Activated CD4-positive, alpha-beta memory T cell treated with anti-CD3 and anti-CD28 coated beads for 36 hours (primary cell): ENCODE measurements at regions of chr11 and their contacts with region 1.

Region 1: DNA sequence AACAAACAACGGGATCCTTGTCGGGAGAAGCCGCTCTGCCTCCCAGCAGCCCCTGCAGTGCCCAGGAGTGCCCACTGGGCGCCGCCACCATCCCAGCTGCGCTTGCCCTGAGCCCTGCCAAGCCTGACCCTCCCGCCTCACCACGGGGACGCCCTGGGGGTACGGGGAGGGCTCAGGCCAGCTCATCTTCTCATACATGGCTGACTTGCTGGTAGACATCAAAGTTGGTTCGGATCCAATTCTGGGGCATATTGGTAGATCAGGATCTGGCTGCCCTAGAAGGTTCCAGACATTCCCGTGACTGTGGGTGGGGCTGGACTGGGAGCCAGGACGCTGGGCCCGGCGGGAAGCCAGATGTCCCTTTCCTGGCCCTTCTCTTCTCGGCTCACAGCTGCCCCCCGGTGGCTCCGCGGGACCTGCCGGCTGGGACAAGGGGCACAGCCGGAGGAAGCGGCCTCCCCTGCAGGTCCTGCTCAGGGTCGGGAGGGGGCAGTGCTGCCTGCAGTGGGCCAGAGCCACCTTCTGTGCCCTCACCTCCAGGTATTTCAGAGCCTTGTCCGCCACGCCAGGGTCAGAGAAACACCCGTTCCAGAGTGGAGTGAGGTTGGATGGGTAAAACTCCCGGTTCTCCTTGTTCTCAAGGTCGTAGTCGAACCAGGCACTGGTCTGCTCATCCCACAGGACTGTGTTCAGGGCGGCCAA is 10.6 kb upstream of the TREH start:
- DNase-seq: peak; percentile 94
- H3K4me3 Mint-ChIP-seq: peak overlapping the region; percentile 79
- H3K27ac Mint-ChIP-seq: peak overlapping the region; percentile 70
- H3K4me1 Mint-ChIP-seq: peaks cover 39% of the 10 kb centered on the region
- H3K27me3 Mint-ChIP-seq: peaks cover 2% of the 10 kb centered on the region

Region 2: DNA sequence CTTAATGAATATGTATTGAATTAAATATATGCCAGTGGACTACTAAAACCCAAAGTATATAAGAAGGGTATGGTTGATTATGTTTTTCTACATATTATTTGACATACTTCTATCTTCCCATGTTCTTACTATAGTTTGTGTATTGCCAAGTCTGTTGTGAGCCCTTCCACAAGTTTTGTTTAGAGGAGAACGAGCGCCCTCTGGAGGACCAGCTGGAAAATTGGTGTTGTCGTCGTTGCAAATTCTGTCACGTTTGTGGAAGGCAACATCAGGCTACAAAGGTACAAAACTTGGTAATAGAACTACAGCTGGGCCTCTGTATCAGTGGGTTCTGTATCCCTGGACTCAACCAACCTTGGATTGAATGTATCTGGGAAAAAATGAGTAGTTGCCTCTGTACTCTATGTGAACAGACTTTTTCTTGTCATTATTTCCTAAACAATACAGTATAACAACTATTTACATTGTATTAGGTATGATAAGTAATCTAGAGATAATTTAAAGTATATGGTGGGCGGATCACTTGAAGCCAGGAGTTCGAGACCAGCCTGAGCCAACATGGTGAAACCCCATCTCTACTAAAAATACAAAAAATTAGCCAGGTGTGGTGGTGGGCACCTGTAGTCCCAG is 201.4 kb before region 1 on chr11:
- CTCF ChIA-PET with region 1: no interaction called
- POLR2A ChIA-PET with region 1: no interaction called
- intact Hi-C with region 1: no loop called
- DNase-seq: peak; percentile 86
- H3K4me3 Mint-ChIP-seq: no peak overlapping the region
- H3K27ac Mint-ChIP-seq: no peak overlapping the region
- H3K4me1 Mint-ChIP-seq: peaks cover 5% of the 10 kb centered on the region
- H3K27me3 Mint-ChIP-seq: no peaks in the 10 kb centered on the region

Region 3: GRCh38 chr11:118610804-118611795 is 78.9 kb before region 1 on chr11:
- CTCF ChIA-PET with region 1: interaction called, 10 read pairs
- POLR2A ChIA-PET with region 1: no interaction called
- intact Hi-C with region 1: no loop called
- DNase-seq: peak; percentile 90
- H3K4me3 Mint-ChIP-seq: peak overlapping the region; percentile 14
- H3K27ac Mint-ChIP-seq: no peak overlapping the region
- H3K4me1 Mint-ChIP-seq: peaks cover 22% of the 10 kb centered on the region
- H3K27me3 Mint-ChIP-seq: peaks cover 12% of the 10 kb centered on the region

Region 4: GRCh38 chr11:118679483-118679882 is 10.5 kb before region 1 on chr11 and contains the start of gene TREH:
- CTCF ChIA-PET with region 1: interaction called, 18 read pairs
- POLR2A ChIA-PET with region 1: no interaction called
- intact Hi-C with region 1: no loop called
- DNase-seq: no peak
- H3K4me3 Mint-ChIP-seq: no peak within 1 kb of the TSS
- H3K27ac Mint-ChIP-seq: no peak within 1 kb of the TSS
- H3K4me1 Mint-ChIP-seq: no peaks in the 10 kb centered on the region
- H3K27me3 Mint-ChIP-seq: no peaks in the 10 kb centered on the region
- total RNA-seq, gene TREH: not detected

Region 5: GRCh38 chr11:118746988-118747585 is 57.1 kb after region 1 on chr11:
- CTCF ChIA-PET with region 1: interaction called, 12 read pairs
- POLR2A ChIA-PET with region 1: no interaction called
- intact Hi-C with region 1: loop called (anchors 5 kb)
- DNase-seq: no peak
- H3K4me3 Mint-ChIP-seq: no peak overlapping the region
- H3K27ac Mint-ChIP-seq: no peak overlapping the region
- H3K4me1 Mint-ChIP-seq: peaks cover 2% of the 10 kb centered on the region
- H3K27me3 Mint-ChIP-seq: no peaks in the 10 kb centered on the region

Region 6: DNA sequence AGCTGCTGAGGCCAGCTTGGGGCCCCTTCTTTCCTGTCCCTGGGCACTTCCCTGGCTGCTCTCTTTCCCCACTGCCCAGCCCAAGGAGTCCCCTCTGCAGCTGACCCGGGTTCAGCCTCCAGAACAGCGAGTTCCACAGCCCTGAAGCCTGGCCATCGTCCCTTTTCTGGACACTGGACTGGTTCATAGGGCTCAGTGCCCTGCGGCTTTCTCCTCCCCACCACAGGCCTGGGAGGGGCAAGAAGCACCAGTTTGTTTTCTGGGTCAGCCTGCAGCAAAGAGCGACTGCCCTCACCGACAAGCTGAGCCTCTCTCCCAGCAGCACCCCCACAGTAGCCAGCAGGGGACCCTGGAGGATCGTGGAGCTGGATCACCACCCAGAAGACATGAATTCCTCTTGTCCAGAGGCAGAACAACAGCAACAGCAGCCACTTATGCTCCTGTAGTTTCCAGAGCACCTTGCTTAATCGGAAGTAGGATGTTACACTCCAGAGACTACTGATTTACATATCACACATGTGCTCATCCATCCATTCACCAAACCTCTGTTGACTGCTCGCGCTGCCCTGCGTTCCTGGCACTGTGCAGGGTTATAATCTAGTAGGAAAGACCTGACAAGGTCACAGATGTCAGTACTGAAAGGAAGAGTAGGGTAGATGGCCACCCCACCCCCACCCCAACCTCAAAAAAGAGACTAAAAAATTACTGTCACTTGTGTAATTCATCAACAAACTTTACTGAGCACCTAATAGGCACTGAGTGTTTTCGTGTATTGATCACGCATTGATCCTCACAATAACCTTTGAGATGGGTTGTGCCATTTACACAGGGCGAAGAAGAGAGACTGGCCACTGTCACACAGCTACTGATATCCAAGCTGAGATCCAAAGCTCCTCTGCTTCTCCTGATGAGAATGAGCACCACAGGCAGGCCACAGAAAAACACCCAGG is 180.7 kb after region 1 on chr11:
- CTCF ChIA-PET with region 1: interaction called, 11 read pairs
- POLR2A ChIA-PET with region 1: interaction called, 3 read pairs
- intact Hi-C with region 1: no loop called
- DNase-seq: peak; percentile 73
- H3K4me3 Mint-ChIP-seq: peak overlapping the region; percentile 83
- H3K27ac Mint-ChIP-seq: peak overlapping the region; percentile 99
- H3K4me1 Mint-ChIP-seq: peaks cover 56% of the 10 kb centered on the region
- H3K27me3 Mint-ChIP-seq: no peaks in the 10 kb centered on the region

Region 7: GRCh38 chr11:118895142-118896039 is 205.4 kb after region 1 on chr11:
- CTCF ChIA-PET with region 1: interaction called, 20 read pairs
- POLR2A ChIA-PET with region 1: interaction called, 4 read pairs
- intact Hi-C with region 1: no loop called
- DNase-seq: peak; percentile 89
- H3K4me3 Mint-ChIP-seq: peak overlapping the region; percentile 58
- H3K27ac Mint-ChIP-seq: peak overlapping the region; percentile 93
- H3K4me1 Mint-ChIP-seq: peaks cover 71% of the 10 kb centered on the region
- H3K27me3 Mint-ChIP-seq: no peaks in the 10 kb centered on the region

Region 8: GRCh38 chr11:118956094-118956846 is 266.3 kb after region 1 on chr11 and contains the start of gene UPK2:
- CTCF ChIA-PET with region 1: interaction called, 12 read pairs
- POLR2A ChIA-PET with region 1: no interaction called
- intact Hi-C with region 1: loop called (anchors 1 kb)
- DNase-seq: peak; percentile 93
- H3K4me3 Mint-ChIP-seq: no peak within 1 kb of the TSS
- H3K27ac Mint-ChIP-seq: no peak within 1 kb of the TSS
- H3K4me1 Mint-ChIP-seq: peaks cover 3% of the 10 kb centered on the region
- H3K27me3 Mint-ChIP-seq: peaks cover 4% of the 10 kb centered on the region
- total RNA-seq, gene UPK2: not detected

Region 9: GRCh38 chr11:119218141-119218878 is 528.3 kb after region 1 on chr11:
- CTCF ChIA-PET with region 1: no interaction called
- POLR2A ChIA-PET with region 1: no interaction called
- intact Hi-C with region 1: no loop called
- DNase-seq: peak; percentile 22
- H3K4me3 Mint-ChIP-seq: no peak overlapping the region
- H3K27ac Mint-ChIP-seq: peak overlapping the region; percentile 23
- H3K4me1 Mint-ChIP-seq: peaks cover 42% of the 10 kb centered on the region
- H3K27me3 Mint-ChIP-seq: no peaks in the 10 kb centered on the region